WTC11 (cell line): ENCODE measurements at regions of chr17 and their contacts with region 1.

Region 1: DNA sequence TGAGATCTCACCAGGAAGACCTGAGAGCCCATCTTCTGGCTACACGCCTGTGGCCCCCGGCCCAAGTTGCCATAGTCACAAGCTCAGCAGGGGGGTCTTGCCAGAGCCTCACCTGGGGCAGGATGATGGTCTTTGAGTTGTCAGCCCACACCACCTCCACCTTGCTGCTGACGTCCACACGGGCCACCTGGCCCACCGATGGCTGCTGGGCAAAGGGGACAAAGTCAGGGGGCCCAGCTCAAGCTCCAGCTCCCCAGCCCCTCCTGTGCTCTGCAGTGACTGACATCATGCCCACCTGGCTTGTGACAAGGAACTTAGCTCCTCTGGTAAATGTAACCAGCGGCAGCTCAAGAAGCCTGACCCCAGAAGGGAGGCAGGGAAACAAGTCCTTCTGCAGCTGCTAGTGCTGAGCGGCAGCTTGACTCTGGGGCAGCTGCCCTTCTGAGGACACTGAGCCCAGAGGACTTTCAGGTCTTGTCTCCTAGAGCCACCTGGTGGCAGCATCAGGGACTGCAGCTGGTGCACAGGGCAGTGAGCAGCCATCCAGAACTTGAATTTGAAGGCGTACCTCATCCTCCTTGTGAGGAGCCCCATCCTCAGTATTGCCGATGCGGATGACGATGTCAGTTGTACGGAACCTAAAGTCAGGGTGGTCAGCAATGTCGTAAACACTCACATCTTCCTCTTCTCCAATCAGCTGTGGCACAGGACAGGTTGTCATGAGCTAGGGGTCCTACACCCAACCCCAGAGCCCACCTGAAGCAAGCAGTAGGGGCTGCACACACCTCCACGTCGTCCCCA is 13.5 kb downstream of the SPHK1 start:
- DNase-seq: peak; percentile 96
- ATAC-seq: peak; percentile 95
- H3K4me3 Mint-ChIP-seq: no peak overlapping the region
- H3K27ac Mint-ChIP-seq: no peak overlapping the region
- H3K4me1 Mint-ChIP-seq: no peaks in the 10 kb centered on the region
- H3K27me3 Mint-ChIP-seq: no peaks in the 10 kb centered on the region
- CTCF ChIP-seq: peak; percentile 96

Region 2: DNA sequence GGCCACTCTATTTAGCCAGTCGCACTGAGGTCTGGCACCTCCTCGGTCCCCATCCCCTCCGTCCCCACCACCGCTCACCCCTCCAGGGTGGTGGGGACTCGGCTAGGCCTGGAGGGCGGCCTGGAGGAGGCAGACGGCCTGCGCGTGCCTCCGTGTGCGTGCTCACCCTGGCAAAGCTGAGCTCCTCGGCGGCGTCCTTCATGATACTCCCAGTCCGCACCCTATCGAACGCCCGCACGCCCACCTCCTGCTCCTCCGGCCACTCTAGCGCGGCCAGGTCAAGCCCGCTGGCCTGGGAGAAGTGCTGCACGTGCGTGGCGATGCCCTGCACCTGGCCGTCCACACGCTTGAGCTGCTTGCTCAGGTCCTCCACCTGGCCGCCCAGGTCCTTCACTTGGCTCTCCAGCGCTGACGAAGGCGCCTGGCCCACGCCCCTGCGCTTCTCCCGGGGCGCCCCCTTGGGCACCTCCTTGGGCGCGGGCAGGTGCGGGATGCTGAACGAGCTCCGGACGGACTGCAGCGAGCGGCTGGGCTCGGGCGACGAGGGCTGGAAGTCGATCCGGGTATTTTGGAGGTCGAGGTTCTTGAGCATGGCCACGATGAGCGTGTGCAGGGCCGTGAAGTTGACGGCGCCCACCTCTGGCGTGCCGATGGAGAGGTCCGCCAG is 90.5 kb before region 1 on chr17:
- CTCF ChIA-PET with region 1: interaction called, 43 read pairs
- POLR2A ChIA-PET with region 1: no interaction called
- DNase-seq: no peak
- ATAC-seq: no peak
- H3K4me3 Mint-ChIP-seq: no peak overlapping the region
- H3K27ac Mint-ChIP-seq: no peak overlapping the region
- H3K4me1 Mint-ChIP-seq: no peaks in the 10 kb centered on the region
- H3K27me3 Mint-ChIP-seq: no peaks in the 10 kb centered on the region
- CTCF ChIP-seq: no peak

Region 3: DNA sequence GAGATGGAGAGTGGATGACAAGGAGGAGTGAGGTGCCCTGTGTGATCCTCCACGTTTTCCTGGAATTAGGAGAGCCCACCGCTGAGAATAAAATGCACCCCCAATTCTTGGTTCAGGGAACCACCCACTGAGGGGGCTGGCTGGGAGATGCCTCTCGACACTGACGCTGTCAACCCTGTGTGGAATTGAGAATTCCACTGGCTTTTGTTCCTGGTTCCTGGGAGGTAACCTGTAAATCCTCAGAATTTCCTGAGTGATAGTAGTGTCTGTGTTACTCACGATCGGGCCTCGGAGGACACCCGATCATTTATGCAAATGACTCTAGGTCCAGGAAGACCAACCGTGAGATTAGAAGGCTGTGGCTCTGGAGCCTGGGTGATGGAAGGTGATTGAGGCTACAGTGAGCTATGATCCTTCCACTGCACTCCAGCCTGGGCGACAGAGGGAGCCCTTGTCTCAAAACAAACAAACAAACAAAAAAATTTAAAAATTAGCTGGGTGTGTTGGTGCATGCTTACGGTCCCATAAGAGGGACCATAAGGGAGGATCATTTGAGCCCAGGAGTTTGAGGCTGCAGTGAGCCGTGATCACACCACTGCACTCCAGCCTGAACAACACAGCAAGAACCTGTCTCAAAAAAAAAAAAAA is 32.5 kb before region 1 on chr17:
- CTCF ChIA-PET with region 1: interaction called, 68 read pairs
- POLR2A ChIA-PET with region 1: no interaction called
- DNase-seq: no peak
- ATAC-seq: peak; percentile 52
- H3K4me3 Mint-ChIP-seq: no peak overlapping the region
- H3K27ac Mint-ChIP-seq: 0 out of 2 replicates have a peak overlapping the region, but pooled peaks have one; percentile 25
- H3K4me1 Mint-ChIP-seq: peaks cover 26% of the 10 kb centered on the region
- H3K27me3 Mint-ChIP-seq: no peaks in the 10 kb centered on the region; the same call in 1 of the 2 replicates
- CTCF ChIP-seq: no peak

Region 4: DNA sequence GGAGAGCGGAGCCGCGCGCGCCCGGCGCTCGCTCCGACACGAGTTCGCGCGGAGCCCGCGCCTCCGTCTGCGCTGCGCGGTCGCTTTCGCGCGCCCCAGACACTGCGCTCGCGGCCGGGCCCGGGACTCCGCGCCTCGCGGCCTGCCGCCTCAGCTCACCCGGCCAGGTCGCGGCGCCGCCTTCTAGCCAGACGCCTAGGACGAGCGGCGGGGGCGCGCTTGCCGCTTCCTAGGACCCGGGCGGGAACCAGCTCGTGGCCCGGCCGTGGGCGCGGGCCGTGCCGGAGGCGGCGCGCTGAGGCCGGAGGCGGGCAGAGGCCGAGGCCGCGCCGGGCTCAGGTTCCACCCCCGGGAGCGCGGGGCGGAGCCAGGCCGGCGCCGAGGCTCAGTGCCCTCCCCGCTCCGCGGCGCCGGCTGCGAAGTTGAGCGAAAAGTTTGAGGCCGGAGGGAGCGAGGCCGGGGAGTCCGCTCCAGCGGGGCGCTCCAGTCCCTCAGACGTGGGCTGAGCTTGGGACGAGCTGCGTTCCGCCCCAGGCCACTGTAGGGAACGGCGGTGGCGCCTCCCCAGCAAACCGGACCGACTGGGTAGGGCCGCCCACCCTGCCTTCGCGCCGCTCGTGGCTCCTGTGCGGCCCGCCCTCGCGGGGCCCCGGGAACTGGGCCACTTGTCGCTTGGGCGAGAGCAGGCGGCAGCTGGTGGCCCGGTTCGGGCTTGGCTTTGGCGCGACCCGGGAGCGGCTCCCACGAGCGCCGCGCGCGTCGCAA is 13.5 kb before region 1 on chr17 and contains the start of gene SPHK1:
- CTCF ChIA-PET with region 1: interaction called, 135 read pairs
- POLR2A ChIA-PET with region 1: interaction called, 4 read pairs
- DNase-seq: peak; percentile 73
- ATAC-seq: peak; percentile 35
- H3K4me3 Mint-ChIP-seq: peak within 1 kb of the TSS; percentile 81
- H3K27ac Mint-ChIP-seq: no peak within 1 kb of the TSS
- H3K4me1 Mint-ChIP-seq: peaks cover 18% of the 10 kb centered on the region
- H3K27me3 Mint-ChIP-seq: peaks cover 49% of the 10 kb centered on the region
- CTCF ChIP-seq: no peak
- total RNA-seq, gene SPHK1: 2.5 to 2.9 TPM (median 2.8 TPM) in 3 replicates

Region 5: GRCh38 chr17:76414334-76415295 is 16.7 kb after region 1 on chr17:
- CTCF ChIA-PET with region 1: interaction called, 36 read pairs
- POLR2A ChIA-PET with region 1: no interaction called
- DNase-seq: no peak
- ATAC-seq: peak; percentile 46
- H3K4me3 Mint-ChIP-seq: no peak overlapping the region
- H3K27ac Mint-ChIP-seq: peak overlapping the region; percentile 13
- H3K4me1 Mint-ChIP-seq: peaks cover 27% of the 10 kb centered on the region
- H3K27me3 Mint-ChIP-seq: no peaks in the 10 kb centered on the region
- CTCF ChIP-seq: no peak

Region 6: DNA sequence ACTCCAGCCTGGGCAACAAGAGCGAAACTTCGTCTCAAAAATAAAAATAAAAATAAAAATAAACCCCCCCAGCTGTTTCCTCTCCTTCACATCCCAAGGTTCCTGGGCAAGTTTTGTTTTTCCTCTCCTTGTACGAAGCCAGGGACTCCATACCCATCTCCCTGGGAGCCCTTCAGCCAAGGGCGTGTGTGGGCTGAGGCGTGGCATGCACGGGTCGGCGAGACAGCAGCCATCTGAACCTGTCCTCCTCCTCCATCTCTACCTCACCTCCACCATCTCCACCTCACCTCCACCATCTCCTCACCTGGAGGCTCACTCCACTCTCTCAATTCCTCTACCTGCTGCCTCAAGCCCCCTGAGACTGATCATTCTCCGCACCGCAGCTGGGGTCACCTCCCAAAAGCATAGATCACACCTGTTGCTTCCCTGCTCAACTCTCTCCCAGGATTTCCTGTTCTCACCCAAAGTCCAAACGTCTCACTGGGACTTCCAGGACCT is 86.4 kb after region 1 on chr17:
- CTCF ChIA-PET with region 1: no interaction called
- POLR2A ChIA-PET with region 1: no interaction called
- DNase-seq: no peak
- ATAC-seq: no peak
- H3K4me3 Mint-ChIP-seq: no peak overlapping the region
- H3K27ac Mint-ChIP-seq: peak overlapping the region; percentile 79; the same call in 1 of the 2 replicates
- H3K4me1 Mint-ChIP-seq: no peaks in the 10 kb centered on the region
- H3K27me3 Mint-ChIP-seq: no peaks in the 10 kb centered on the region
- CTCF ChIP-seq: no peak

Region 7: DNA sequence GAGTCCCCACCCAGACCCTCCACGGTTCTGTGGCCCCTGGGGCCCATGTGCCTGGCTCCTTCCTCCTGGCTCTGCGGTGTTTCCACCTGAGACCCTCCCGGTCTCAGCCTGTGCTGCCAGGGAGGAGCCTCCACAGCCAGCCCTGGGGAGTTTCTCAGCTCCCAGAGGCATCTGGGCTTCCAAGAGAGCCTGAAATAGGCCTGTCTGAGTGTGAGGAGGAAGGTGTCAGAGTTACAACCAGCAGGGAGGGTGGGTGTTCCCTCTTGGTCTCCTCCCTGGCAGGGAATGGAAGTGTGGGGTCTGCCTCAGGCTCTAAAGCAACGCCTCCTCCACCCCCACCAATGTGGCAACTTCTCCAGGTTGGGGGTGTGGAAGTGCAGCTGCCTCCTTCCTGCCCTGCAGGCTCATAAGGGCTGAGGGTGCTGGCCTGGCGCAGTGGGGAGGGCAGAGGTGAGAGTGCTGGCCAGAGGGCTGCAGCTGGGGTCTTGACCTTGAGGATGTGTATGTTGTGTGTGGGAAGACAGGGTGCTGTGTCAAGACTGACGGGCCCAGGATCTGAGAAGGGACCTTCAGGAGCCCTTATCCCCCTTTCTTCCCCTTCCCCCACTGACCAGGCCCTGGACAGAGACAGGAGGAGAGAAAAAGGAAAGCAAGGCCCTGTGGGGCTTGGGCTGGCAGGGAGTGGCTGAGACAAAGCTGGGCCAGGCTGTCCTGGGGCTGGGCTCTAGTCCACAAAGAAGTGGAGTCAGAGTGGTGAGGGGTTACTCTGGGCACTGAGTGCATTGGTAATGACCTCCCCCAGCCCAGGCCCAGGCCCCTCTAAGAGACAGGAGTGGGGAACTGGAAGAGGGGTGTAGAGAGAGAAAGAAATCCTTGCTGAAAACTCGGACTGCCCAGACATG is 137.2 kb after region 1 on chr17:
- CTCF ChIA-PET with region 1: no interaction called
- POLR2A ChIA-PET with region 1: no interaction called
- DNase-seq: no peak
- ATAC-seq: no peak
- H3K4me3 Mint-ChIP-seq: no peak overlapping the region
- H3K27ac Mint-ChIP-seq: no peak overlapping the region
- H3K4me1 Mint-ChIP-seq: peaks cover 17% of the 10 kb centered on the region
- H3K27me3 Mint-ChIP-seq: peaks cover 44% of the 10 kb centered on the region
- CTCF ChIP-seq: no peak

Region 8: DNA sequence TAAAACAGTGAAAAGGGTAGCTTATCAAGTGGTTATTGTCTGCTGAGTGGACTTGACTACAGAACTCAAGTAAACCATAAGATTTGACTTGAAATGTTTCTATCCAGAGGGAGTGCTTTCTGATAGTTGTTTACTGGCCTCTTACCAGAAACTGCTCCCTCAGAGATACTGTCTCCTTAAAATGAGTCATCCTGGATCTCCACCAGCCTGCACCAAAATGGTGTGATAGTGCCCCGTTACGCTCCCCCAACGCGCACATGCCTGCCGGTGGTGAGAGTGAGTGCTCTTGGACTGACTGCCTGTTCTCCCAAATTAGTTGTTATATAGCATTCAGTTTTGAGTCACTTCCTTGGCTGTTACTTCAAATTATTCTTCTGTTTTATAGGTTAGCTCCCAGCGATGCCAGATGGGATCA is 164.9 kb after region 1 on chr17:
- CTCF ChIA-PET with region 1: no interaction called
- POLR2A ChIA-PET with region 1: no interaction called
- DNase-seq: no peak
- ATAC-seq: no peak
- H3K4me3 Mint-ChIP-seq: no peak overlapping the region; the same call in 1 of the 2 replicates
- H3K27ac Mint-ChIP-seq: peak overlapping the region; percentile 77
- H3K4me1 Mint-ChIP-seq: peaks cover 61% of the 10 kb centered on the region
- H3K27me3 Mint-ChIP-seq: no peaks in the 10 kb centered on the region
- CTCF ChIP-seq: no peak

Region 9: DNA sequence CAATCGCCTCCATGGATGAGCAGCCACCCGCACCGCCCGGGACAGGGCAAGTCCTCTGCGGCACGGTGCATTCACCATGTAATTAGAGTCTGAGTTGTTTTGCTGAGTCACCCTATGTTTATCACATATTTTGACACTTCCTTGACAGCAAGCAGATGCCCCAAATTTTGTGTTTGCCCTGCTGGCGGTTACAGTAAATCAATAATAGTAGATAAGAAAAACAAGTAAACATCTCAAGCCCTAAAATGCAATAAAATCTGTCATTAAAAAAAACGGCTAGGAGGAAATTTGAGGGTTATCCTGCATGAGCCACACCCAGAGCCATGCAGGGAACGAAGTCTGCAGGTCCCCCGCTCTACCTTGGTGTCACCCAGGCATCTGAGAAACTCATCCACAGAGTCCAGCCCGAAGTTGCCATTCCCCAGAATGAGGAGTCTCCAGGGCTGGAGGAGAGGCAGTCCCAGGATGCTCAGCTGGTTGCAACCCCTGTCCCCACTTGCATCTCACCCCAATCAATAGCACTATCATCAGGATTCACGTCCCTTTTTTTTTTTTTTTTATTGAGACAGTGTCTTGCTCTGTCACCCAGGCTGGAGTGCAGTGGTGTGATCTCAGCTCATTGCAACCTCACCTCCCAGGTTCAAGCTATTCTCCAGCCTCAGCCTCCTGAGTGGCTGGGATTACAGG is 262.2 kb after region 1 on chr17:
- CTCF ChIA-PET with region 1: no interaction called
- POLR2A ChIA-PET with region 1: no interaction called
- DNase-seq: no peak
- ATAC-seq: no peak
- H3K4me3 Mint-ChIP-seq: no peak overlapping the region
- H3K27ac Mint-ChIP-seq: no peak overlapping the region
- H3K4me1 Mint-ChIP-seq: peaks cover 4% of the 10 kb centered on the region; the same call in 1 of the 2 replicates
- H3K27me3 Mint-ChIP-seq: no peaks in the 10 kb centered on the region
- CTCF ChIP-seq: no peak